AG04450 (cell line): ENCODE measurements at regions of chr1 and their contacts with region 1.

Region 1: DNA sequence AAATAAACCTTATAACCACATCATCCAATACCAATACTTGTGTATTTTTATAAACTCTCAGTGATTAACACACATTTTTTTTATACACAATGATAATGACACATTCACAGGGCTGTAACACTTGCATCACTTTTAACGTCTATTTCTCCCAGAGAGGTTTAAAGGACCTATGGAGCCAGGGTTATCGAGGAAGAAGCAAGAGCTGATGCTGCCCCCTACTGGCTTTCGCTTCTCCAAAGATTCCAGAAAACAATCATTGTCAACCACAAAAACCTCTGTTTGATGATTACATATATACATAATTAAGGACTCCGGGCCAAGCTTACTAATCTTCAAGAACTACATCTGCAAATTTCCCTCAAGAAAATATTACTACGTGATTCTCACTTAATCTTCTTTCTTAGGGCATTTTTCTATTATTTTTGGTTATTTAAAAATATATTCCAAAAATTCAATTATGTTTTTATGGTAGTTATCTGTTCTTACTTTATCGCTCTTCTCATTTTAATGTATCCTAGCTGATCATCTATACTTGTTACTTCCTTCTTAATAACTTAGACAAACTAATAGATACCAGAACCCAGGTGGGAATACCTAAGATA is 214.5 kb downstream of the VAV3 start:
- DNase-seq: peak; percentile 8
- H3K4me3 ChIP-seq: no peak overlapping the region
- H3K27ac ChIP-seq: no peak overlapping the region
- H3K27me3 ChIP-seq: no peaks in the 10 kb centered on the region
- CTCF ChIP-seq: peak; percentile 80

Region 2: DNA sequence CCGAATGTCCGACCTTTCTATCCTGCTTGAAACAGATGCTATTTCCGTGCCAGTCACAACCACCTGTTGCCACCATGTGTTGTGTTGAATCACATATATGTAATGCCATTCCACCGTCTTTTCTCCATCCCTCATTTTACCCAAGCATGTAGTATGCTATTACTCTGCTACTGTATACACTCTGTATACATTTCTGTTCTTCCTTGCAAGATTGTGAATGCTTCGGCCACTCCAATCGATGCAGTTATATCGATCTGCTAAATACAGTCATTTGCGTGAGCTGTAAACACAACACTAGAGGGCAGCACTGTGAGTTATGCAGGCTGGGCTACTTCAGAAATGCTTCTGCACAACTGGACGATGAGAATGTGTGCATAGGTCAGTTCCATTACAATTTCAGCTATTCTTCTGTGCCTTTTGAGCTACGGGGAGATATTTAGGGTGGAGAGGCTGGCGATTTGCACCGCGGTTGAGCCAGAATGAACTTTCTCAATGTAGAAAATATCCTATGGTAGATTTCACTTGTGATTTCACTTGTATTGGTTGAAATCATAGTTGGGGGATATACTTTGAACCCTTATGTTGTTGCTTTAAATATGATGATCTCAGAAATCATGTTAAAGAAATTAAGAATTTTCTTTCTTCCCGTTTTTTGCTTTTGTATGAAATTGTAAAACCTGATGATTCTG is 319.8 kb before region 1 on chr1:
- CTCF ChIA-PET with region 1: interaction called, 18 read pairs
- POLR2A ChIA-PET with region 1: no interaction called
- DNase-seq: peak; percentile 6
- H3K4me3 ChIP-seq: no peak overlapping the region
- H3K27ac ChIP-seq: no peak overlapping the region
- H3K27me3 ChIP-seq: no peaks in the 10 kb centered on the region
- CTCF ChIP-seq: peak; percentile 61

Region 3: GRCh38 chr1:107739228-107739627 is 11.2 kb before region 1 on chr1:
- CTCF ChIA-PET with region 1: interaction called, 17 read pairs
- POLR2A ChIA-PET with region 1: no interaction called
- DNase-seq: no peak
- H3K4me3 ChIP-seq: no peak overlapping the region
- H3K27ac ChIP-seq: no peak overlapping the region
- H3K27me3 ChIP-seq: no peaks in the 10 kb centered on the region
- CTCF ChIP-seq: no peak